Prostate gland (tissue), 2 donors: ENCODE measurements at regions of chr12 and their contacts with region 1.

Region 1: DNA sequence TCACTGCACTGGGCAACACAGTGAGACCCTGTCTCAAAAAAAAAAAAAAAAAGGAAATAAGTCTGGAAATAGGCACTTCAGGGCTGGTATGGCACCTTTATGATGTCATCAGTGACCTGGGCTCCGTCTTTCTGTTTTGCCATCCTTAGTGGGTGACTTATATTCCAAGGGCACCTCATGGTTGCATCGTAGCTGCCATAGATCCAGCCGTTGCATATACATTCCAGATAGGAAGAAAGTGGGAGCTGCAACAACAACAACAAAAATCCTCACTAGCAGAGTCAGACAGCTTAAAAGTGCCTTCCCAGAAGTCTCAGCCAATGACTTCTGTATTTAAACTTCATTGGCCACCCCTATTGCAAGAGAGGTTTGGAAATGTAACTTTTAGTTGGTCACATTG is 26.4 kb downstream of the MYL2 start:
- DNase-seq: no peak
- H3K4me3 ChIP-seq: no peak overlapping the region
- H3K27ac ChIP-seq: no peak overlapping the region
- H3K4me1 ChIP-seq: no peaks in the 10 kb centered on the region
- H3K27me3 ChIP-seq: no peaks in the 10 kb centered on the region
- CTCF ChIP-seq: no peak
- POLR2A ChIP-seq: no peak

Region 2: DNA sequence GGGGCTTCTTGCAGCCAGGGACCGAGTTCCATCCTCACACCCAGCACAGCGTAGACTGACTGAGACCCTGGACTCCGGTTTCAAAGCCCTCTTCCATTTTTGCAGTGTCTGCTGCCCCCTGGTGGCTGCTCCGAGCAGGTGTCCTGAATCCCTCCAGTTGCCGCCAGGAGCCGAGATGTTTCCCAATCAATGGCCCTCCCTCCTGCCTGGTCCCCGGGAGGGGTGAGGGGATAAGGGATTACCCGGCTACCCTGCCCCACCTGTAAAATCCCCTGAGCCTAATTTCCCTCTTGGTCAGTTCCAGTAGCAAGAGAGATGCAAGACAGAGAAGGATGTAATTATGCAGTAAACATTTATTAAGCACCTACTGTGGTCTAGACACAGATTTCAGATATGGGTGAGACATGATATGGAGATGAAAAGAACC is 419.9 kb after region 1 on chr12:
- intact Hi-C with region 1: loop called (anchors 5 kb)
- DNase-seq: peak; percentile 57
- H3K4me3 ChIP-seq: no peak overlapping the region
- H3K27ac ChIP-seq: no peak overlapping the region
- H3K4me1 ChIP-seq: no peaks in the 10 kb centered on the region
- H3K27me3 ChIP-seq: no peaks in the 10 kb centered on the region
- CTCF ChIP-seq: peak; percentile 79 to 93 (median 92)
- POLR2A ChIP-seq: no peak